Caco-2 (cell line): ENCODE measurements at regions of chr3 and their contacts with region 1.

Region 1: GRCh38 chr3:79751703-79752102 is 16.1 kb downstream of the ROBO1 start:
- DNase-seq: no peak
- H3K4me3 ChIP-seq: no peak overlapping the region
- H3K4me3 Mint-ChIP-seq: no peak overlapping the region
- H3K27ac Mint-ChIP-seq: no peak overlapping the region
- H3K4me1 ChIP-seq: no peaks in the 10 kb centered on the region
- H3K4me1 Mint-ChIP-seq: no peaks in the 10 kb centered on the region
- H3K27me3 ChIP-seq: no peaks in the 10 kb centered on the region
- H3K27me3 Mint-ChIP-seq: peaks cover 3% of the 10 kb centered on the region
- CTCF ChIP-seq: no peak

Region 2: DNA sequence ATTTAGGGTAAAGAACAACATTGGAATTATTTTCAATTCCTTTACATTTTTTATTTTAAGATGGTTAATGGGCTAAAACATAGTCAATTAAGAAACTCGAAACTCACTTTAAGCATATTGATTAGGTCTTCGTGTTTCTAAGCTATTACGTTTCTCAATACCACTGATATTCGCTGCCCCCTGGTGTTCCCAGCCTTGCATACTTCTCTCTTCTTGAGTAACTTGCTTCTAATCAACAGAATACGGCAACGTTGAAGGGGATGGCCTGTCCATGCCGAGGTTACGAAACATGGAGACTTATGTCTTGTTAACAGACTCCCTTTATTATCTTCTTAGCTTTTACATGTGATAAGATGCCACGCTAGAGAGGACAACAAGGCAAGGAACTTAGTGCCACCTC is 27.5 kb before region 1 on chr3:
- CTCF ChIA-PET with region 1: no interaction called
- POLR2A ChIA-PET with region 1: no interaction called
- intact Hi-C with region 1: loop called (anchors 1 kb)
- DNase-seq: peak in 1 of 2 experiments; percentile 4
- H3K4me3 ChIP-seq: no peak overlapping the region
- H3K4me3 Mint-ChIP-seq: no peak overlapping the region
- H3K27ac Mint-ChIP-seq: no peak overlapping the region
- H3K4me1 ChIP-seq: no peaks in the 10 kb centered on the region
- H3K4me1 Mint-ChIP-seq: no peaks in the 10 kb centered on the region
- H3K27me3 ChIP-seq: no peaks in the 10 kb centered on the region
- H3K27me3 Mint-ChIP-seq: no peaks in the 10 kb centered on the region
- CTCF ChIP-seq: no peak